ENCODE measurements at regions of chr5 and their contacts with region 1.

Region 1: DNA sequence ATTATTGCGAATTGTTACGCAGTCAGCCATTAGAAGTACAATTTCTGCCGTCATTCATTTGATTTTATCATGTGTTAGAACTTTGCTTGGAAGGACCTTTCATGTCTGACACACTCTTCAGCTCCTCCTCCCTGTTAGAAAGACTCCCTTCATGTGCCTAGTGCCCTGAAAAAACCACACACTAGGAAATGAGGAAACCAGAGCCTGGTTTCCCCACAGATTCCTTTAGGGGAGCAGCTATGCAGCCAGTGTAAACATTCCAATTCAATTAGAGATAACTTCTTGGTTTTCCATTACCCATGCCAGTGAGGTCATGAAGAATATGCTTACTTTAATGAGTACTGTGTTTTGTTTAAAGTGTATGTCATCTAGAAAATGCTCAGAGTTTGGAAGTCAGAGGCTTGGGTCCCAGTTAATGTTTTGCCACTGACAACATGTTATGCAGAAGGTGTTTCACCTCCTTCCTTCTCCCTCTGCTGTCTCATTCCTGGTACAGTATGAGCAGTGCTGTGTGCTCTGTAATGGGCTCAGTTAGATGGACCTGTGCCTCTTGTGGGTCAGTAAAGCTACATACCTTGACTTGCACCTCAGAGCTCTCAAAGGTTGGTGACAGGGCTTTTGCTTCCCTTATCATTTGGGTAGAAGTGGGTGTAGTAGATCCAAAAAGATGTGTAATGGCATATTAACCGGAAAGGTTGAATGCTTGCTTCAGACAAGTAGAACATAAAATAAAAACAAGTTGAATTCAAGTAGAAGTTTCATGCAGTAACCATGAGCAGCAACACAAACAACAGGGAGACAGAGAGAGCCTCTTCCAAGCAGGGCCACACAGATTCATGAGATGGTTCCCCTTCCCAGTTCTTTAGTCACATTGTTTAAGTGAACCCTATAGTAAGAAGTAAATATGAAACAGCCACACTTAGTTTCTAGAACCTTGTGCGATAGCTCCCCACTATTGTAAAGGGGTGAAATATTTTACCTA is 52.6 kb upstream of the TNFAIP8 start:
- DNase-seq: peak in 1 of 9 experiments; percentile 56
- ATAC-seq: peak; percentile 65
- H3K4me3 ChIP-seq: no peak overlapping the region
- H3K4me3 Mint-ChIP-seq: peak overlapping the region; percentile 64
- H3K27ac ChIP-seq: peak overlapping the region; percentile 1 to 60
- H3K27ac Mint-ChIP-seq: peak overlapping the region; percentile 99
- H3K4me1 ChIP-seq: peaks cover 83% of the 10 kb centered on the region
- H3K4me1 Mint-ChIP-seq: peaks cover 94% of the 10 kb centered on the region
- H3K27me3 ChIP-seq: no peaks in the 10 kb centered on the region
- H3K27me3 Mint-ChIP-seq: no peaks in the 10 kb centered on the region
- CTCF ChIP-seq: no peak

Region 2: GRCh38 chr5:118491351-118491750 is 811.9 kb before region 1 on chr5:
- CTCF ChIA-PET with region 1: no interaction called
- POLR2A ChIA-PET with region 1: no interaction called
- intact Hi-C with region 1: no loop called
- DNase-seq: no peak
- ATAC-seq: no peak
- H3K4me3 ChIP-seq: no peak overlapping the region
- H3K4me3 Mint-ChIP-seq: no peak overlapping the region
- H3K27ac ChIP-seq: no peak overlapping the region
- H3K27ac Mint-ChIP-seq: no peak overlapping the region
- H3K4me1 ChIP-seq: no peaks in the 10 kb centered on the region
- H3K4me1 Mint-ChIP-seq: no peaks in the 10 kb centered on the region
- H3K27me3 ChIP-seq: no peaks in the 10 kb centered on the region
- H3K27me3 Mint-ChIP-seq: no peaks in the 10 kb centered on the region
- CTCF ChIP-seq: no peak

Region 3: GRCh38 chr5:118968925-118969375 is 334.3 kb before region 1 on chr5:
- CTCF ChIA-PET with region 1: no interaction called
- POLR2A ChIA-PET with region 1: no interaction called
- intact Hi-C with region 1: no loop called
- DNase-seq: no peak
- ATAC-seq: no peak
- H3K4me3 ChIP-seq: no peak overlapping the region
- H3K4me3 Mint-ChIP-seq: no peak overlapping the region
- H3K27ac ChIP-seq: no peak overlapping the region
- H3K27ac Mint-ChIP-seq: no peak overlapping the region
- H3K4me1 ChIP-seq: no peaks in the 10 kb centered on the region
- H3K4me1 Mint-ChIP-seq: peaks cover 23% of the 10 kb centered on the region
- H3K27me3 ChIP-seq: no peaks in the 10 kb centered on the region
- H3K27me3 Mint-ChIP-seq: no peaks in the 10 kb centered on the region
- CTCF ChIP-seq: no peak

Region 4: GRCh38 chr5:119290161-119290569 is 13.0 kb before region 1 on chr5:
- CTCF ChIA-PET with region 1: interaction called, 4 read pairs
- POLR2A ChIA-PET with region 1: interaction called, 8 read pairs
- intact Hi-C with region 1: loop called in 1 of 2 experiments (anchors 2 kb)
- DNase-seq: peak in 2 of 9 experiments; percentile 41 to 68
- ATAC-seq: peak; percentile 27
- H3K4me3 ChIP-seq: peak overlapping the region; percentile 9 to 10
- H3K4me3 Mint-ChIP-seq: peak overlapping the region; percentile 69
- H3K27ac ChIP-seq: peak overlapping the region; percentile 9 to 83
- H3K27ac Mint-ChIP-seq: peak overlapping the region; percentile 97
- H3K4me1 ChIP-seq: peaks cover 75% of the 10 kb centered on the region
- H3K4me1 Mint-ChIP-seq: peaks cover 86% of the 10 kb centered on the region
- H3K27me3 ChIP-seq: no peaks in the 10 kb centered on the region
- H3K27me3 Mint-ChIP-seq: no peaks in the 10 kb centered on the region
- CTCF ChIP-seq: no peak

Measured in CD8-positive, alpha-beta T cell (primary cell).